CD8-positive, alpha-beta T cell (primary cell): ENCODE measurements at regions of chr22 and their contacts with region 1.

Region 1: DNA sequence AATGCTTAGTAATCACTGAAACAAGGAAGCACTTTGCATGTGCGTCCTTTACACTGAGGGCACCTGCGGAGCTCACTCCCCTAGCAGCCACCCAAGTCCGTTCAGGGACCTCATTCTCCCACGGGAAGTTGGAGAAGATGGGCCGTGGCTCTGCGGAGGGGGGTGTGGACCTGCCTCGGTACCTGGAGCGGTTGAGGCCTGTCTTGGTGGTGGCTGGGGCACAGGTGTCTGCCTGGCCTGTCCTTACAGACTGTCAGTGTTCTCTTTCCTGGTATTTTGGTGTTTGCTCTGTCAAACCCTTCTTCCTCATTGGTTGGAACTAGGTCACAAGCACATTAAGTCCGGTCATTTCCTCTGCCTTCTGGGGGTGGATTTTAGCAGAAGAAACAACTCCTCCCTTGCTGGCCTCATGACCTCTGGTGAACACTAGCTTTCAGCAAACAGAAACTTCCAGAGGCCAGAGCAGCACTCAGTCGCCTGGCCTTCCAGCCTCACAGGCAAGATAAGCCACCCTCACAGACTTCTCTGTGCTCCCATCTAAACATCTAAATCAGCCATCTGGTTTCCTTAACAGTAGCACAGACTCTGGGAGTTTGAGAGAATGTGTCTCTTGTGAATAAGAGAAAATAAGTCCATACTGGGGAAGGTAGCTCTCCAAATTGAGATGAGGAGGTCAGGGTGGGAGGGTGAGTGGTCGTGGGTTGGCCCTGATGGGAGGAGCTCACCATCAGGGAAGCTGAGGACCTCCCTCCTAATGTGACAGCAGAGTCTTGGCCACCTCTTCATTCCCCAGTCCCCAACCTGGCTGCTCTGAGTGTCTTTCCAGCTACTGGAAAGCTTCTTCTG is 8.6 kb downstream of the SNAP29 start:
- DNase-seq: peak in 2 of 9 experiments; percentile 40 to 53
- ATAC-seq: no peak
- H3K4me3 ChIP-seq: no peak overlapping the region
- H3K4me3 Mint-ChIP-seq: no peak overlapping the region
- H3K27ac ChIP-seq: peak overlapping the region in 1 of 2 experiments; percentile 74
- H3K27ac Mint-ChIP-seq: peak overlapping the region; percentile 18
- H3K4me1 ChIP-seq: no peaks in the 10 kb centered on the region
- H3K4me1 Mint-ChIP-seq: peaks cover 27% of the 10 kb centered on the region
- H3K27me3 ChIP-seq: no peaks in the 10 kb centered on the region
- H3K27me3 Mint-ChIP-seq: no peaks in the 10 kb centered on the region
- CTCF ChIP-seq: no peak

Region 2: DNA sequence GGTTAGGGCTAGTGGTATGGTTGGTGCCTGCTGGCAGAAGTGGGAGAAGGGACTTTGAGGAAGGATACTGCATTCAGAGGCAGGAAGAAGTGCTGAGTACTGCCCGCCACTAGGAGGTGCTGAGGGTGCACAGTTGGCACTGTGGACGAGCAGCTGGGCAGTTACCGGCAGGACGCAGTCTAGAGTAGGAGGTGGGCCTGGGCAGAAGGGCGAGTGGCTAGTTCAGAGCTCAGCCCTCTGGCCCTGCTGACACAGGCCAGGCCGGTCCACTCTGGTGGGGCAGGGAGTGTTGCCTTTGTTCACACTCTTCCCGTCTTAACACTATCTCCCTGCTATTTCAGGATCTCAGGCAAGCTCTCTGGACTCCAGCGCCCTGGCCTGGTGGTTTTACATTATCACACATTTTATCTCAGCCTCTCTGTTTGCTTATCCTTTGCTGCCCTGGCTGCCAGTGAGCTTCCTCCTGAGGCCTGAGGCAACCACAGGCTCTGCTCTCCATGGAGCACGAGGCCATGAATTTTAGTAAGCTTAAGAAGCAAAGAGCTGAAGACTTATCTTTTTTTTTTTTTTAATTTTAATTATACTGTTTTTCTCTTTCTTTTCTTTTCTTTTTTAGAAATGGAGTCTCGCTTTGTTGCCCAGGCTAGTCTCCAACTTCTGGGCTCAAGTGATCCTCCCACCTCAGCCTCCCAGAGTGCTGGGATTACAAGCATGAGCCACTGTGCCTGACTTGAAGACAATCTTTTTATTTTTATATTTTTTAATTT is 18.3 kb after region 1 on chr22:
- CTCF ChIA-PET with region 1: interaction called, 5 read pairs
- POLR2A ChIA-PET with region 1: no interaction called
- intact Hi-C with region 1: loop called (anchors 2 kb)
- DNase-seq: peak in 8 of 9 experiments; percentile 4 to 57 (median 38)
- ATAC-seq: peak; percentile 40
- H3K4me3 ChIP-seq: no peak overlapping the region
- H3K4me3 Mint-ChIP-seq: no peak overlapping the region
- H3K27ac ChIP-seq: no peak overlapping the region
- H3K27ac Mint-ChIP-seq: no peak overlapping the region
- H3K4me1 ChIP-seq: no peaks in the 10 kb centered on the region
- H3K4me1 Mint-ChIP-seq: no peaks in the 10 kb centered on the region
- H3K27me3 ChIP-seq: no peaks in the 10 kb centered on the region
- H3K27me3 Mint-ChIP-seq: no peaks in the 10 kb centered on the region
- CTCF ChIP-seq: peak; percentile 43

Region 3: DNA sequence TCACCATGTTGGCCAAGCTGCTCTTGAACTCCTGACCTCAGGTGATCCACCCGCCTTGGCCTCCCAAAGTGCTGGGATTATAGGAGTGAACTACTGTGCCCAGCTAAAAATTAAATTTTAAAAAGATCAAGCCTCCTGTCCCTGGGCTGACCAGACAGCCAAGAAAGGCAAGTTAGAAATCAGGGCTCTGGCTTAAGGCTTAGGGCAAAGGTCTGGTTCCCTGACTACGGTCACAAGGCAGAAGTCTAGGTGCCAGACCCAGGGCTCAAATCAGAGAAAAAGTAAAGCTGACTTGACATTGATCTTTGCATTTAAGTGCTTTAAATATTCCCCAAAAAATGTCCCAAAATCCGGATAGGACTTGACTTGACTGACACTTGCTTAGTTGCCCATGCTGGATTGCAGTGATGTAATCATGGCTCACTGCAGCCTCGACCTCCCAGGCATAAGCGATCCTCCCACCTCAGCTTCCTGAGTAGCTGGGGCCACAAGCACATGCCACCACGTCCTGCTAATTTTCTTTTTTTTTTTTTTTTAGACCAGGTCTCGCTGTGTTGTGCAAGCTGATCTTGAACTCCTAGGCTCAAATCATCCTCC is 32.5 kb after region 1 on chr22:
- CTCF ChIA-PET with region 1: no interaction called
- POLR2A ChIA-PET with region 1: no interaction called
- intact Hi-C with region 1: no loop called
- DNase-seq: no peak
- ATAC-seq: no peak
- H3K4me3 ChIP-seq: no peak overlapping the region
- H3K4me3 Mint-ChIP-seq: no peak overlapping the region
- H3K27ac ChIP-seq: no peak overlapping the region
- H3K27ac Mint-ChIP-seq: no peak overlapping the region
- H3K4me1 ChIP-seq: no peaks in the 10 kb centered on the region
- H3K4me1 Mint-ChIP-seq: no peaks in the 10 kb centered on the region
- H3K27me3 ChIP-seq: no peaks in the 10 kb centered on the region
- H3K27me3 Mint-ChIP-seq: peaks cover 5% of the 10 kb centered on the region
- CTCF ChIP-seq: no peak